Activated CD8-positive, alpha-beta T cell treated with anti-CD3 and anti-CD28 coated beads, Interleukin-2, amount 10 ng/mL, durations not matched to agents 7 days and 5 days (primary cell): ENCODE measurements at regions of chr6 and their contacts with region 1.

Region 1: GRCh38 chr6:26270903-26271667 is 93.9 kb upstream of the BTN3A2 start:
- DNase-seq: peak; percentile 91
- ATAC-seq: peak; percentile 47
- H3K4me3 Mint-ChIP-seq: no peak overlapping the region
- H3K27ac Mint-ChIP-seq: no peak overlapping the region
- H3K4me1 Mint-ChIP-seq: peaks cover 40% of the 10 kb centered on the region
- H3K27me3 Mint-ChIP-seq: no peaks in the 10 kb centered on the region

Region 2: DNA sequence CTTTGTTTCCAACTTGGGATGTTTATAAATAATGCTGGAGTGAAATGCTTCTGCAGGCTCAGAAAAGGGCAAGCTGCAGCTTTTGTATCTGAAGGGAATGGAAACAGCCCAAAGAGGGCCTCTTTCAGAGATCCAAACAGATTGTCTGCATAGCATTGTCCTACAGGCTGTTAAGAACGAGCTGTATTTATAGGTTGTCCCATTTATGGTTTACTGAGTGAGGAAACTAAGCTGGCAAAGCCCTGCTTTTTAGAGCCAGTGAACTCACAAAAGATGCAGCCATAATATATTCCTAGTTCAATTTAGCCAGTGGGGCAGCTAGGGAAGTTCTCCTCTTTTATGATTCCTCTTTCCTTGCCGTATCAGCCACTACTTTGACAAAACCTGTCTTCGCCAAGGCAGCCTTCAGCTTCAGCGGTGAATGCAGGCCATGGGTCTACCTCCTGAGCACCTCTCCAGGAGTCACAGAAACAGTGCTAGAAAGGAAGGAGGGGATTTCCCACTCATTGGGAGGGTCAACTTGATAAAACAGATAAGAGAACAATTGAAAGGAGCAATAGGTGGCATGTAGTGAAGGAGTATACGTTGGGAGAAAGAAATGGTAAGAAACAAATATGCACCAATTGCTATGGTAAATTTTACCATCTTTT is 1640.1 kb before region 1 on chr6:
- CTCF ChIA-PET with region 1: no interaction called
- POLR2A ChIA-PET with region 1: no interaction called
- DNase-seq: no peak
- ATAC-seq: no peak
- H3K4me3 Mint-ChIP-seq: no peak overlapping the region
- H3K27ac Mint-ChIP-seq: no peak overlapping the region
- H3K4me1 Mint-ChIP-seq: no peaks in the 10 kb centered on the region
- H3K27me3 Mint-ChIP-seq: peaks cover 26% of the 10 kb centered on the region

Region 3: DNA sequence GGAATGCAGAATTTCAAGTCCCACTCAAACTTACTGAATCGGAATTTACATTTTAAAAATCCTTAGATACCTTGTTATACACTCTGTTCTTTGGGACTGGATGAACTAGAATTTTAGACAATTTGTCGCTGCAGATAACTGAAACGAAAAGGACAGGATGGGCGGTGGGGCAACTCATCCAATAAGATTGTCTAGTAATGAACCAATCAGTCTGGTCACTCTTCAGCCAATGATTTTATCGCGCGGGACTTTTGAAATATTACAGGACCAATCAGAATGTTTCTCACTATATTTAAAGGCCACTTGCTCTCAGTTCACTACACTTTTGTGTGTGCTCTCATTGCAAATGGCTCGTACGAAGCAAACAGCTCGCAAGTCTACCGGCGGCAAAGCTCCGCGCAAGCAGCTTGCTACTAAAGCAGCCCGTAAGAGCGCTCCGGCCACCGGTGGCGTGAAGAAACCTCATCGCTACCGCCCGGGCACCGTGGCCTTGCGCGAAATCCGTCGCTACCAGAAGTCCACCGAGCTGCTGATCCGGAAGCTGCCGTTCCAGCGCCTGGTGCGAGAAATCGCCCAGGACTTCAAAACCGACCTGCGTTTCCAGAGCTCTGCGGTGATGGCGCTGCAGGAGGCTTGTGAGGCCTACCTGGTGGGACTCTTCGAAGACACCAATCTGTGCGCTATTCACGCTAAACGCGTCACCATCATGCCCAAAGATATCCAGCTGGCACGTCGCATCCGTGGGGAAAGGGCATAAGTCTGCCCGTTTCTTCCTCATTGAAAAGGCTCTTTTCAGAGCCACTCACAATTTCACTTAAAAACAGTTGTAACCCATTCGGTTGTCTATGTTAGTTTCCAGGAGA is 225.8 kb before region 1 on chr6:
- CTCF ChIA-PET with region 1: no interaction called
- POLR2A ChIA-PET with region 1: interaction called, 25 read pairs
- DNase-seq: peak; percentile 91
- ATAC-seq: peak; percentile 55
- H3K4me3 Mint-ChIP-seq: peak overlapping the region; percentile 88
- H3K27ac Mint-ChIP-seq: peak overlapping the region; percentile 99
- H3K4me1 Mint-ChIP-seq: peaks cover 43% of the 10 kb centered on the region
- H3K27me3 Mint-ChIP-seq: no peaks in the 10 kb centered on the region

Region 4: DNA sequence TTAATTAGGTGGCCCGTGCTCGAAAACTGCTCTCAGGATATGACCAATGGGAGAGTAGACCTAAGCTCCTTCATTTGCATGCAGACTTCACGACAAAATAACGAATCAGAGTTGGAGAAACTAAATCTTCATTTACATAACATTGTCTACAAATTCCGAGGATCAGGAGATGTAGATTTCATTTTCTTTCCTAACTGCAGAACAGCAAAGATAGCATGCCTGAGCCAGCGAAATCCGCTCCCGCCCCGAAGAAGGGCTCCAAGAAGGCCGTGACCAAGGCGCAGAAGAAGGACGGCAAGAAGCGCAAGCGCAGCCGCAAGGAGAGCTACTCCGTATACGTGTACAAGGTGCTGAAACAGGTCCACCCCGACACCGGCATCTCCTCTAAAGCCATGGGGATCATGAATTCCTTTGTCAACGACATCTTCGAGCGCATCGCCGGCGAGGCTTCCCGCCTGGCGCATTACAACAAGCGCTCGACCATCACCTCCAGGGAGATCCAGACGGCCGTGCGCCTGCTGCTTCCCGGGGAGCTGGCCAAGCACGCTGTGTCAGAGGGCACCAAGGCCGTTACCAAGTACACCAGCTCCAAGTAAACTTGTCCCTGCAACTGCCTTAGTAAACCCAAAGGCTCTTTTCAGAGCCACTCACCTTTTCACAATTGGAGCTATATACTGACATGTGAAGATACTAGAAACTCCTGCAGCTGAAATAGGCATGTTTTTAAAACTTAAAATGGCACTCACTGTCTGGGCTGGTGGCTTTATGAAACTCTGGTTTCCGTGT is 87.3 kb before region 1 on chr6:
- CTCF ChIA-PET with region 1: interaction called, 4 read pairs
- POLR2A ChIA-PET with region 1: interaction called, 71 read pairs
- DNase-seq: peak; percentile 80
- ATAC-seq: peak; percentile 80
- H3K4me3 Mint-ChIP-seq: peak overlapping the region; percentile 83
- H3K27ac Mint-ChIP-seq: peak overlapping the region; percentile 97
- H3K4me1 Mint-ChIP-seq: peaks cover 79% of the 10 kb centered on the region
- H3K27me3 Mint-ChIP-seq: no peaks in the 10 kb centered on the region

Region 5: DNA sequence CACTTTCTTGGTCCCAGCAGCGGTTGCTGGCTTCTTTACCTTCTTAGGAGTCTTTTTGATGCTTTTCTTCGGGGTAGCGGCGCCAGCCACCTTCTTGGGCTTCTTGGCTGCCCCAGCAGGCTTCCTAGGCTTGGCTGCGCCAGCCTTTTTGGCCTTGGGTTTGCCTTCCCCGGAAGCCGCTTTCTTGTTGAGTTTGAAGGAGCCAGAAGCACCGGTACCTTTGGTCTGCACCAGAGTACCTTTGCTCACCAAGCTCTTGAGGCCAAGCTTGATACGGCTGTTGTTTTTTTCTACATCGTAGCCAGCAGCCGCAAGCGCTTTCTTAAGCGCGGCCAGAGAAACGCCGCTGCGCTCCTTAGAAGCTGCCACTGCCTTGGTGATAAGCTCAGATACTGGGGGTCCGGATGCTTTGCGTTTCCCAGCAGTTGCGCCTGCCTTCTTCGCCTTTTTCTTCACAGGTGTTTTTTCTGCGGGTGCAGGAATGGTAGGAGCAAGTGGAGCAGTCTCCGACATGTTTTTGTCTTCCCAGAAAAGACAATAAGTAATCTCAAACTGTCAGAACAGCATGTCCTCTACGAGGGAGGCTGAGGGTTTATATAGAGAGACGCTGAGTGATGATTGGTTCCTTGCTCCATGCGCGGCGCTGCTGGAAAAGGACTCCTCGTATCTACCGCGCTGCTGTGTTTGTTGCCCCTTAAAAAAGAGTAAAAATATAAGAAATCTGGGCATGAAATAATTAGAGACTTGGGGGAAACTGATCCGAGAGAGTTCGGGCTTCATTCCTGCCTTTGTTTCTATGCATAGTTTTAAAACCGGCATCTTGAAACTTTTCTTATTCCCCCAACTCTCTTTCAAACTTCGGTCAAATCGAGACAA is 36.4 kb before region 1 on chr6:
- CTCF ChIA-PET with region 1: interaction called, 4 read pairs
- POLR2A ChIA-PET with region 1: interaction called, 465 read pairs
- DNase-seq: peak; percentile 89
- ATAC-seq: peak; percentile 64
- H3K4me3 Mint-ChIP-seq: peak overlapping the region; percentile 78
- H3K27ac Mint-ChIP-seq: peak overlapping the region; percentile 99
- H3K4me1 Mint-ChIP-seq: peaks cover 41% of the 10 kb centered on the region
- H3K27me3 Mint-ChIP-seq: no peaks in the 10 kb centered on the region

Region 6: GRCh38 chr6:26312501-26313390 is 41.7 kb after region 1 on chr6:
- CTCF ChIA-PET with region 1: interaction called, 4 read pairs
- POLR2A ChIA-PET with region 1: interaction called, 23 read pairs
- DNase-seq: peak; percentile 89
- ATAC-seq: peak; percentile 87
- H3K4me3 Mint-ChIP-seq: peak overlapping the region; percentile 84
- H3K27ac Mint-ChIP-seq: peak overlapping the region; percentile 89
- H3K4me1 Mint-ChIP-seq: peaks cover 49% of the 10 kb centered on the region
- H3K27me3 Mint-ChIP-seq: no peaks in the 10 kb centered on the region

Region 7: GRCh38 chr6:27138837-27139755 is 868.0 kb after region 1 on chr6:
- CTCF ChIA-PET with region 1: no interaction called
- POLR2A ChIA-PET with region 1: interaction called, 124 read pairs
- DNase-seq: peak; percentile 87
- ATAC-seq: peak; percentile 68
- H3K4me3 Mint-ChIP-seq: peak overlapping the region; percentile 95
- H3K27ac Mint-ChIP-seq: peak overlapping the region; percentile 98
- H3K4me1 Mint-ChIP-seq: peaks cover 71% of the 10 kb centered on the region
- H3K27me3 Mint-ChIP-seq: no peaks in the 10 kb centered on the region

Region 8: GRCh38 chr6:27864906-27865849 is 1594.1 kb after region 1 on chr6:
- CTCF ChIA-PET with region 1: no interaction called
- POLR2A ChIA-PET with region 1: interaction called, 40 read pairs
- DNase-seq: peak; percentile 90
- ATAC-seq: peak; percentile 57
- H3K4me3 Mint-ChIP-seq: peak overlapping the region; percentile 87
- H3K27ac Mint-ChIP-seq: peak overlapping the region; percentile 99
- H3K4me1 Mint-ChIP-seq: peaks cover 55% of the 10 kb centered on the region
- H3K27me3 Mint-ChIP-seq: no peaks in the 10 kb centered on the region